ENCODE measurements at regions of chr6 and their contacts with region 1.

Region 1: DNA sequence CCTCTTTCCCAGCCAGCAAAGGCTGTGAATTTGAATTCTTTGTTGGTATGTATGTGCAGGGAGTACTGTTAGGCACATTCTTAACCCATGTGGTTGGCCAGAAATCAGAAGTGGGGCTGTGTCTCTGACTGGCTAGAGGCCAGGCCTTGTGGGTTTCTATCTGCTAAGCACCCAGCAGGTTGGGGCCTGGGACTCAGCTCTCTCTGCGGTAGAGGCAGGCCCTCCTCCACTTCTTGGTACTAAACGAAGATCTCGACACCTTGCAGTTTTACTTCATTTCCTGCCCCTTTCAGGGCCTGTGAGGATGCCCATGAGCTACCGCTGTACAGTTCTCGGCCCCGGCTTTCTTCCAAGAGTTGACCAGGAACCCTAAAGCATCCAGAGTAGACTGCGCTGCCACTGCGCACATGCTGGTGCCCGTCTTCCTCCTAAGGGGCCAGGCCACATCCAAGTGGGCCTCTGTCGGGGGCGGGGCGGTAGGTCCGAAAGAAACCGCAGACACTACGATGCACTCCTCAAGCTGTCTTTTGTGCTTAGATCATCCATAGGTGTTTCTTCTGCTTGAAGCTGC is 51.1 kb downstream of the TCP11 start:
- DNase-seq: peak; percentile 65

Region 2: DNA sequence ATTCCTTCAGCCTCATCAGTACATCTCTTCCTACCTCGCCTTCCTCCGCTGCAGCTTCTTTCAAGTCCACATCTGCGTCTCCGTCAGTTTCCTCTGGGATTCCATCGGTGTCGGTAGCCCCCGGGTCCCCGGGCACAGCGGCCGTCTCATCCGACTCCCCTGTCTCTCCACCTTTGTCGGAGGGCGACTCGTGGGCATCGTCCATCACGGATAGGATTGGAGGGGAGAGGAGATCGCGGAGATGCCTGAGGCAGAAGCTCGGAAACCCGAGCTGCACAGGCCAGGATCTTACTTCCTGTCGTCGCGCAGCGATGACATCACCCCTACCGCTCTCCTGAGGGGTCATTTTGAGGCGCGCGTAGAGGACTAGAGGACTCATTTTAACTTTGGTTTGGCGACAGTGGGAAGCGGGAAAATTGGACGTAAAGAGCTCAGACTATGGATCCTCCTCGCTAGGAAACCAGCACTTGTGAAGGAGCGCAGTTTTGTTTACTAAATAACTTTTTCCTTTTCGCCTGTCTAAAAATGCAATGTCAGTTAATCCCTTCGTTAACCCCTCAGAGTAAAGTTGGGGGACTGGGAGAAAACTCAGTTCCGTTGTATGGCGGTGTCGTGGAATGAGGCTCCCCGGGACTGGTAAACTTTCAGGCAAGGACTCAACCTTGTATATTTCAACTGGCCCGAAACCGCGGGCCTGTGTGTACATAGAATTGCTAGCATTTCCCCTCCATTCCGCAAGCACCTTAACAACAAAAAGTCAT is 202.1 kb before region 1 on chr6 and contains the start of gene TAF11:
- intact Hi-C with region 1: loop called in 1 of 2 experiments (anchors 2 kb)
- DNase-seq: peak; percentile 98
- total RNA-seq, gene TAF11: 19.1 to 21.0 TPM

Region 3: GRCh38 chr6:35058865-35059522 is 31.0 kb before region 1 on chr6:
- intact Hi-C with region 1: loop called in 1 of 2 experiments (anchors 1 kb)
- DNase-seq: no peak

Region 4: DNA sequence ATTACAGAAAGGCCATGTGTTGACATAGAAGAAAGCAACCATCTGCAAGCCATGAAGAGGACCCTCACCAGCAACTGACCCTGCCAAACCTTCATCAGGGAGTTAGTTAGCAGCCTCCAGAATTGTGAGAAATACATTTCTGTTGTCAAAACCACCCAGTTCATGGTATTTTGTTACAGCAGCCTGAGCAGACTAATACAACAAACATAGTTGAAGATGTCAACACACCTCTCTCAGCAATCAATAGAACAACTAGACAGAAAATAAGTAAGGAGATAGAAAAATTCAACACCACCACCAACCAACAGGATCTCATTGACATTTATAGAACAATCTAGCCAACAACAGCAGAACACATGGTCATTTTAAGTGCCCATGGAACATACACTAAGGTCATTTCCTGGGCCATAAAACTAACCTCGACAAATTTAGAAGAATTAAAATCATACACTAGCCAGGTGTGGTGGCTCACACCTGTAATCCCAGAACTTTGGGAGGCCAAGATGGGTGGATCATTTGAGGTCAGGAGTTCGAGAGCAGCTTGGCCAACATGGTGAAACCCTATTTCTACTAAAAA is 18.4 kb after region 1 on chr6:
- intact Hi-C with region 1: no loop called
- DNase-seq: no peak